Naive thymus-derived CD4-positive, alpha-beta T cell (primary cell): ENCODE measurements at regions of chr1 and their contacts with region 1.

Region 1: DNA sequence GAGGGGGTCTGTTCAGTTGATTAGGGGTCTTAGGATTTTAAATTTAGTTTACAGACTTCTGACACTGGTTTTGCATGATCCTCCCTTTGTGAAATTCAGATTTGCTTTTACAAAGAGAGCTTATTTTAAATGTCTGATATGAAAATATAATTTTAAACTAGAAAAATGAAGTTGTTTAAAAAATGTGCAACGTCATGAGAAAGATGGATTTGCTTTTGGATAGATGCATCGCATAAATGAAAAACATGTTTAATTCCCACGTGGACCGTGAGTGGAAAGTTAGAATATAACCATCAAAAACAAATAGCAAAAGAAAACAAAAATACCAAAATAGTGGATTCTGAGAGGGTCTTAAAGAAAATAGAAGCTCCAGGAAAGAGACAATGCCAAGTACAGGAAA is 2.0 kb upstream of the OR2T3 start:
- DNase-seq: no peak
- ATAC-seq: no peak
- H3K4me3 ChIP-seq: no peak overlapping the region
- H3K4me3 Mint-ChIP-seq: no peak overlapping the region
- H3K27ac ChIP-seq: no peak overlapping the region
- H3K27ac Mint-ChIP-seq: peak overlapping the region in 1 of 9 donors; percentile 28
- H3K4me1 ChIP-seq: no peaks in the 10 kb centered on the region
- H3K4me1 Mint-ChIP-seq: peaks cover 0 to 5% (median 0%) of the 10 kb centered on the region in 7 donors
- H3K27me3 ChIP-seq: no peaks in the 10 kb centered on the region
- H3K27me3 Mint-ChIP-seq: peaks cover 0 to 16% (median 0%) of the 10 kb centered on the region in 5 donors

Region 2: GRCh38 chr1:246709835-246710234 is 1761.3 kb before region 1 on chr1:
- CTCF ChIA-PET with region 1: no interaction called
- POLR2A ChIA-PET with region 1: no interaction called
- intact Hi-C with region 1: no loop called
- DNase-seq: no peak
- ATAC-seq: no peak
- H3K4me3 ChIP-seq: no peak overlapping the region
- H3K4me3 Mint-ChIP-seq: no peak overlapping the region
- H3K27ac ChIP-seq: no peak overlapping the region
- H3K27ac Mint-ChIP-seq: peak overlapping the region in 1 of 9 donors; percentile 14
- H3K4me1 ChIP-seq: no peaks in the 10 kb centered on the region
- H3K4me1 Mint-ChIP-seq: peaks cover 0 to 9% (median 3%) of the 10 kb centered on the region in 7 donors
- H3K27me3 ChIP-seq: no peaks in the 10 kb centered on the region
- H3K27me3 Mint-ChIP-seq: peaks cover 0 to 14% (median 9%) of the 10 kb centered on the region in 5 donors

Region 3: GRCh38 chr1:248225537-248225936 is 245.6 kb before region 1 on chr1:
- CTCF ChIA-PET with region 1: no interaction called
- POLR2A ChIA-PET with region 1: no interaction called
- intact Hi-C with region 1: no loop called
- DNase-seq: no peak
- ATAC-seq: no peak
- H3K4me3 ChIP-seq: no peak overlapping the region
- H3K4me3 Mint-ChIP-seq: no peak overlapping the region
- H3K27ac ChIP-seq: no peak overlapping the region
- H3K27ac Mint-ChIP-seq: no peak overlapping the region
- H3K4me1 ChIP-seq: no peaks in the 10 kb centered on the region
- H3K4me1 Mint-ChIP-seq: no peaks in the 10 kb centered on the region
- H3K27me3 ChIP-seq: peaks cover 0 to 3% of the 10 kb centered on the region in 2 donors
- H3K27me3 Mint-ChIP-seq: peaks cover 0 to 26% (median 5%) of the 10 kb centered on the region in 5 donors

Region 4: DNA sequence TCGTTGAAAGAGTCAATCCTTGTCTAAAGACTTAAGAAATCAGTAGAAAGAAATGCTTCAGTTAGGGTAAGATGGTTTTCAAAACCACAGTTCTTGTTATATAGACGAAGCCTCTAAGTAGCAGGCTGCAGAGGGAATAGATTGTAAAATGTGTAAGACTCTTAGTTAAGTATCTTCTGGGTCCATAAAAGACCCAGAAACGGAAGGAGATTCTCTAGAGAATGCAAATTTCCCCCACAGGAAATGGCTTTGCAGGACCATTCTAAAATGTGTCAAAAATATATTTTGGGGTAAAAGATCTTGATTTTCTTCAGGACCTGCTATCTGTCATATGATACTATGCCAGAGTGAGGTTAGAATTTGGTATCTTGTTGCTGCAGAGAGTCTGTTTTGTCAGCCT is 54.9 kb before region 1 on chr1:
- CTCF ChIA-PET with region 1: no interaction called
- POLR2A ChIA-PET with region 1: no interaction called
- intact Hi-C with region 1: loop called in 1 of 2 experiments (anchors 10 kb)
- DNase-seq: no peak
- ATAC-seq: peak; percentile 16
- H3K4me3 ChIP-seq: no peak overlapping the region
- H3K4me3 Mint-ChIP-seq: peak overlapping the region in 5 of 10 donors; percentile 4 to 68 (median 32)
- H3K27ac ChIP-seq: no peak overlapping the region
- H3K27ac Mint-ChIP-seq: peak overlapping the region in 6 of 9 donors; percentile 2 to 81 (median 39)
- H3K4me1 ChIP-seq: peaks cover 0 to 29% of the 10 kb centered on the region in 2 donors
- H3K4me1 Mint-ChIP-seq: peaks cover 23 to 52% (median 45%) of the 10 kb centered on the region in 7 donors
- H3K27me3 ChIP-seq: no peaks in the 10 kb centered on the region
- H3K27me3 Mint-ChIP-seq: no peaks in the 10 kb centered on the region